ENCODE measurements at regions of chr7 and their contacts with region 1.

Region 1: DNA sequence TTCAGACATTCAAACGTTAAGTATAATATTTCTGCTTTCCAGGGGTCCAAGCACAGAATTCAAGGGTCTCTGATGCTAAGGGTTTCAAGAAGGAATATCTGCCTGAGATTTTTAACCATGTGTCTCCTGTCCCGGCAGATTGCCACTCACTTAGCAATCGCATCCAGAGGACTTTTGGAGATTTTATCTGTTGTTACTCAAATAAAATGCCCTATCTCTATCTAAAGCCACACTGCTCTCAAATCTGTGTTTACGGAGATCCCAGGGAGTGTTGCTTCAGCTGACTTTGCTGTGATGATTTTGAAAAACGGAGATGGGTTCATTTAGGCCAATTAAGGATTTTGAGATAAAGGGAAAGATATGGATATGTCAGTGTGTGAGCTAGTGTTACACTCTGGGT is 359.9 kb downstream of the DGKB start:
- DNase-seq: no peak
- ATAC-seq: no peak
- H3K4me3 Mint-ChIP-seq: no peak overlapping the region
- H3K27ac Mint-ChIP-seq: no peak overlapping the region
- H3K4me1 Mint-ChIP-seq: no peaks in the 10 kb centered on the region
- H3K27me3 Mint-ChIP-seq: no peaks in the 10 kb centered on the region
- CTCF ChIP-seq: no peak

Region 2: DNA sequence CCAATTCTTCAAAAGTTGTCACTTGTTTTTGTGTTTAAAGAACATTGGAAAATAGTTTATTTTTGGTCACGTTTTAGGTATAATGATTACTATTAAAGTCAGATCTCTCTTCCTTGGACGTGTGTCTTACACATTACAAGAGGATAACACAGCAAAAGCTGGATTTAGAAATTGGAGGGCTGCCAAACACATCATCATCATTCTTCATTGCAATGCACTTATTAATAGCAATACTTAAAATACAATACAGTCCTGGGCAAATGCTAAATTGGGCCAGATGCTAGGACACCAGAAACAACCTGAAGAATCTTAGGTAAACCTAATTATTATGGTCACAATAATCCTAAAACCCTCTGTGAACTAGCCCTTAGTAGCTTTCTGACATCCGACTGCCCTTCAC is 56.4 kb after region 1 on chr7:
- CTCF ChIA-PET with region 1: no interaction called
- POLR2A ChIA-PET with region 1: no interaction called
- intact Hi-C with region 1: loop called (anchors 10 kb)
- DNase-seq: no peak
- ATAC-seq: no peak
- H3K4me3 Mint-ChIP-seq: no peak overlapping the region
- H3K27ac Mint-ChIP-seq: no peak overlapping the region
- H3K4me1 Mint-ChIP-seq: no peaks in the 10 kb centered on the region
- H3K27me3 Mint-ChIP-seq: no peaks in the 10 kb centered on the region
- CTCF ChIP-seq: no peak

Region 3: GRCh38 chr7:14888962-14889361 is 346.3 kb after region 1 on chr7:
- CTCF ChIA-PET with region 1: no interaction called
- POLR2A ChIA-PET with region 1: no interaction called
- intact Hi-C with region 1: no loop called
- DNase-seq: no peak
- ATAC-seq: no peak
- H3K4me3 Mint-ChIP-seq: no peak overlapping the region
- H3K27ac Mint-ChIP-seq: no peak overlapping the region
- H3K4me1 Mint-ChIP-seq: no peaks in the 10 kb centered on the region
- H3K27me3 Mint-ChIP-seq: no peaks in the 10 kb centered on the region
- CTCF ChIP-seq: no peak

Measured in activated B cell treated with CpG ODN at 0.5 μM for 24 hours (primary cell).